BJ (cell line): ENCODE measurements at regions of chr4 and their contacts with region 1.

Region 1: DNA sequence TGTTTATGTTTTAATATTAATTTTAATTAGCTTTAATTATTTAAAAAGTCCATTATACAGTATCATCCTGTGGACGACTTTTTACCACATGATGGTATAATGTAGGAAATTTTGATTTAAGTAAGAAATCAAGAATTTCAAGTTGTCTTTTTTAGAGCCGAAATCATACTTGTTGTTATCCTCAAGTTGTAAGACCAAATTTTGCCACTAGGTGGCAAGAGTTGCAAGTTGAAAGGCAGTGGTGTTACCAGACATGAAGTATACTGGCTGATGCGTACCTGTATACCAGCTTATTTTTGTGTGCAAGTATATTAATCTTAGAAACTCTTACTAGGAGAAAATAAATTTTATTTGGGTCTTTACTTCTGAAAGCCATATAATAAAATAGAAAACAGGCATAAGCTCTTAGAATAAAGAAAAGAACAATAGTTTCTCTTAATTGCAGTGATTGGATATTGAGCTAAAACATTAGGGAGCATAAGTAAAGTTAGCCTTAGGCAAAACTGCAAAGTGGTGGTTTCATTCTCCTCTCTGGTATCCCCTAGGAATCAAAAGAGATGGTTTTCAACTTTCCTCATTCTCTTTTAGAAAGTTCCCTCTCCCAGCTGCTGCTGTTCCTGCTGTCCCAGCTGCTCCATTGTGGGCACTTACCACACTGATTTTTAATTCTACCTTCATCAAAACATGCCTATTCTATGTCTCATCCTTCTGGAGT is 118.0 kb upstream of the WDFY3 start:
- DNase-seq: no peak
- H3K4me3 ChIP-seq: no peak overlapping the region
- H3K27me3 ChIP-seq: no peaks in the 10 kb centered on the region
- CTCF ChIP-seq: peak; percentile 68

Region 2: GRCh38 chr4:85102606-85103005 is 18.1 kb after region 1 on chr4:
- CTCF ChIA-PET with region 1: interaction called, 12 read pairs
- POLR2A ChIA-PET with region 1: no interaction called
- DNase-seq: no peak
- H3K4me3 ChIP-seq: no peak overlapping the region
- H3K27me3 ChIP-seq: no peaks in the 10 kb centered on the region; the same call in 1 of the 2 replicates
- CTCF ChIP-seq: no peak

Region 3: GRCh38 chr4:85218756-85219155 is 134.2 kb after region 1 on chr4:
- CTCF ChIA-PET with region 1: no interaction called
- POLR2A ChIA-PET with region 1: no interaction called
- DNase-seq: no peak
- H3K4me3 ChIP-seq: no peak overlapping the region
- H3K27me3 ChIP-seq: no peaks in the 10 kb centered on the region
- CTCF ChIP-seq: no peak